Brain microvascular endothelial cell (primary cell): ENCODE measurements at regions of chr16 and their contacts with region 1.

Region 1: DNA sequence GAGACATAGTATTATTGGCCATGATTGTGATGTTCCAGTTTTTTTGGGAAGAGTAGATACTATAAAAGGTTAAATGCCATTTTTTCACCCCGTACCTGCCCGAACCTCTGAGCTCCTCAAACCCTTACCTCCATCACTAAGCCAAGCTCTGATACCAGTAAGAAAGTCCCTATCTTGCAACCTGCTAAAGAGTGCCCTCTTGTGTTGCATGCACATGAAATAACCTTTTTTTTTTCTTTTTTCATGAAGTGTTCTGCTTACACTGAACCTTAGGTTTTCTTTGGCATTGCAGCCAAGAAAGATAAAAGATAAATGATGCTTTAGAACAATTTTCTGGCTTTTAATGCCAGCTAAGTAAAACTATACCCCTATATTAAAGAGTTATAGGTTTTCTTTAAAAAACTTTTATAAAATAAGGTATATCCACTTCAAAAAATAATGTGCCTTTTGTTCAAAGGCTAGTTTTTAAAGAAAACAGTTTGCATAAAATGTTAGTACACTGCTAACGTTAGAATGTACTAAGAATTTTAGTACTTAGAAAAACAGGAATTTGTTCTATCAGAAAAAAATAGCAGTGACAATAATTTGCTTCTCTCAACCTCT is 295.3 kb upstream of the PMFBP1 start:
- DNase-seq: peak; percentile 31
- H3K4me3 ChIP-seq: no peak overlapping the region
- H3K27ac ChIP-seq: no peak overlapping the region
- H3K27me3 ChIP-seq: no peaks in the 10 kb centered on the region
- CTCF ChIP-seq: peak; percentile 70

Region 2: GRCh38 chr16:72241930-72242329 is 225.3 kb before region 1 on chr16:
- in situ Hi-C with region 1: loop called (anchors 25 kb)
- DNase-seq: peak; percentile 53
- H3K4me3 ChIP-seq: no peak overlapping the region
- H3K27ac ChIP-seq: no peak overlapping the region
- H3K27me3 ChIP-seq: no peaks in the 10 kb centered on the region
- CTCF ChIP-seq: peak; percentile 96